ENCODE measurements at regions of chr11 and their contacts with region 1.

Region 1: DNA sequence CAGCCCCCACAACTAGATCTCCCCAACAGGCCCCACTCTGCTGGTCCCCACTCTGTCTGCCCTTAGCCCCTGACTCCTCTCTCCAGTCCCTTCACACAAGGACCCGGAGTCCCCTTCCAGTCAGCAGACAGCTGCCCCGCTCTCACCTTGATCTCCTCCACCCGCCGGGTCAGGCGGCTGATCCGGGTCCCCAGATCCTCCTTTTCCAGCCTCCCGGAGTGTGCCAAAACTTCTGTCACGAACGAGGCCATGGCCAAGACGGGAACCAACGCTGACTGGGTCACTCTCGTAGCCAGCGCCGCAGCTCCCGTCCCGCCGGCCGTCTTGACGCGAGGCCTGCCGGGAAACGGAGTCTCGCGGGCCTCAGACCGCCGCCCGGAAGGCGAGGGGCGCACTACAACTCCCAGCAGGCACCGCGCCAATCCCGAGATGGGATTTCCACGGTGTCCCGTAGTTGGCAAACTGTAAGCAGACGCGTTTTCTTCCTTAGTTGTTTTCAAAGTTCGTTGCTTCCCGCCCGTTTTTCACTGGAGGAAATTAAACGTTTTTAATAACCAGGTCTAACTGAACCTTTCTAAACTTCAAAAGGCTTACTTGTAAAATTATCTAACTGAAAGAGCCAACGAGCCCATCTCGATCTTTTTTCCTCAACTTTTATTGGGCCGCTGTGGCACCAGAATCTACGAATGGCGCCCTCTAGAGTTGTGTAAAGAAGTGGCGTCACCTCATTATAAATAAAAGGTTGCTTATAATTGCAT is at the start of gene ZW10:
- DNase-seq: peak; percentile 89
- ATAC-seq: peak; percentile 96
- H3K4me3 Mint-ChIP-seq: peak within 1 kb of the TSS; percentile 98
- H3K27ac Mint-ChIP-seq: peak within 1 kb of the TSS; percentile 82
- H3K4me1 Mint-ChIP-seq: peaks cover 21% of the 10 kb centered on the region
- H3K27me3 Mint-ChIP-seq: peaks cover 7% of the 10 kb centered on the region
- CTCF ChIP-seq: peak; percentile 54
- total RNA-seq, gene ZW10: 13.8 and 15.5 TPM in 2 replicates

Region 2: GRCh38 chr11:112226062-112226830 is 1547.3 kb before region 1 on chr11 and contains the start of gene PTS:
- CTCF ChIA-PET with region 1: no interaction called
- POLR2A ChIA-PET with region 1: interaction called, 4 read pairs
- intact Hi-C with region 1: loop called (anchors 1 kb)
- DNase-seq: peak; percentile 87
- ATAC-seq: peak; percentile 93
- H3K4me3 Mint-ChIP-seq: peak within 1 kb of the TSS; percentile 92
- H3K27ac Mint-ChIP-seq: peak within 1 kb of the TSS; percentile 96
- H3K4me1 Mint-ChIP-seq: peaks cover 13% of the 10 kb centered on the region
- H3K27me3 Mint-ChIP-seq: no peaks in the 10 kb centered on the region
- CTCF ChIP-seq: no peak
- total RNA-seq, gene PTS: 22.7 and 30.4 TPM in 2 replicates

Region 3: GRCh38 chr11:113305440-113306336 is 467.9 kb before region 1 on chr11:
- CTCF ChIA-PET with region 1: no interaction called
- POLR2A ChIA-PET with region 1: interaction called, 3 read pairs
- intact Hi-C with region 1: loop called (anchors 1 kb)
- DNase-seq: peak; percentile 48
- ATAC-seq: peak; percentile 89
- H3K4me3 Mint-ChIP-seq: no peak overlapping the region
- H3K27ac Mint-ChIP-seq: no peak overlapping the region
- H3K4me1 Mint-ChIP-seq: no peaks in the 10 kb centered on the region
- H3K27me3 Mint-ChIP-seq: peaks cover 5% of the 10 kb centered on the region
- CTCF ChIP-seq: no peak

Region 4: DNA sequence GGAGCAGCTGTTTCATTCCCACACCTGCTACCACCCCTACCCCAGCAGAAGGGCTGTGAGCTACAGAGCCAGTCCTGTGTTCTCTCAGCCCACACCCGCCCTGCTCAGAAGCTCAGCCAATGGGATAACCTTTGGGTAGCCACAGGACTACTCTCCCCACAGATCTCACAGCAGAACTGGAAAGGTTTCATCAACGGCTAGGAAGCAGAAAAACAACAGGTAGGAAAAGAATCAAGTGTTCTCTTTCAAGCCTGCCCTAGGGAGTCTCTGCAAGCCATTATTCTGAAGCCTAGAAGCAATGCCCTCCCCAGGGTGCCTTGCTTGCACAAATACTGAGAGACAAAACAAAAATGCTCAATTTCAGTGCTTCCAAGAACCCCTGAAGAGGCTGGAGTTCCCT is 144.7 kb before region 1 on chr11:
- CTCF ChIA-PET with region 1: no interaction called
- POLR2A ChIA-PET with region 1: no interaction called
- intact Hi-C with region 1: no loop called
- DNase-seq: no peak
- ATAC-seq: no peak
- H3K4me3 Mint-ChIP-seq: no peak overlapping the region
- H3K27ac Mint-ChIP-seq: no peak overlapping the region
- H3K4me1 Mint-ChIP-seq: no peaks in the 10 kb centered on the region
- H3K27me3 Mint-ChIP-seq: peaks cover 15% of the 10 kb centered on the region
- CTCF ChIP-seq: no peak

Region 5: GRCh38 chr11:113760241-113760640 is 13.4 kb before region 1 on chr11:
- CTCF ChIA-PET with region 1: no interaction called
- POLR2A ChIA-PET with region 1: no interaction called
- intact Hi-C with region 1: no loop called
- DNase-seq: no peak
- ATAC-seq: no peak
- H3K4me3 Mint-ChIP-seq: no peak overlapping the region
- H3K27ac Mint-ChIP-seq: no peak overlapping the region
- H3K4me1 Mint-ChIP-seq: no peaks in the 10 kb centered on the region
- H3K27me3 Mint-ChIP-seq: no peaks in the 10 kb centered on the region
- CTCF ChIP-seq: no peak

Region 6: GRCh38 chr11:113796663-113797259 is 23.2 kb after region 1 on chr11:
- CTCF ChIA-PET with region 1: interaction called, 5 read pairs
- POLR2A ChIA-PET with region 1: no interaction called
- intact Hi-C with region 1: loop called (anchors 2 kb)
- DNase-seq: no peak
- ATAC-seq: peak; percentile 60
- H3K4me3 Mint-ChIP-seq: no peak overlapping the region
- H3K27ac Mint-ChIP-seq: no peak overlapping the region
- H3K4me1 Mint-ChIP-seq: no peaks in the 10 kb centered on the region
- H3K27me3 Mint-ChIP-seq: no peaks in the 10 kb centered on the region
- CTCF ChIP-seq: peak; percentile 32

Region 7: GRCh38 chr11:113875234-113876073 is 101.9 kb after region 1 on chr11 and contains the start of gene USP28:
- CTCF ChIA-PET with region 1: no interaction called
- POLR2A ChIA-PET with region 1: interaction called, 6 read pairs
- intact Hi-C with region 1: loop called (anchors 1 kb)
- DNase-seq: peak; percentile 92
- ATAC-seq: peak; percentile 86
- H3K4me3 Mint-ChIP-seq: peak within 1 kb of the TSS; percentile 96
- H3K27ac Mint-ChIP-seq: peak within 1 kb of the TSS; percentile 97
- H3K4me1 Mint-ChIP-seq: peaks cover 66% of the 10 kb centered on the region
- H3K27me3 Mint-ChIP-seq: no peaks in the 10 kb centered on the region
- CTCF ChIP-seq: no peak
- total RNA-seq, gene USP28: 39.6 and 49.6 TPM in 2 replicates

Region 8: DNA sequence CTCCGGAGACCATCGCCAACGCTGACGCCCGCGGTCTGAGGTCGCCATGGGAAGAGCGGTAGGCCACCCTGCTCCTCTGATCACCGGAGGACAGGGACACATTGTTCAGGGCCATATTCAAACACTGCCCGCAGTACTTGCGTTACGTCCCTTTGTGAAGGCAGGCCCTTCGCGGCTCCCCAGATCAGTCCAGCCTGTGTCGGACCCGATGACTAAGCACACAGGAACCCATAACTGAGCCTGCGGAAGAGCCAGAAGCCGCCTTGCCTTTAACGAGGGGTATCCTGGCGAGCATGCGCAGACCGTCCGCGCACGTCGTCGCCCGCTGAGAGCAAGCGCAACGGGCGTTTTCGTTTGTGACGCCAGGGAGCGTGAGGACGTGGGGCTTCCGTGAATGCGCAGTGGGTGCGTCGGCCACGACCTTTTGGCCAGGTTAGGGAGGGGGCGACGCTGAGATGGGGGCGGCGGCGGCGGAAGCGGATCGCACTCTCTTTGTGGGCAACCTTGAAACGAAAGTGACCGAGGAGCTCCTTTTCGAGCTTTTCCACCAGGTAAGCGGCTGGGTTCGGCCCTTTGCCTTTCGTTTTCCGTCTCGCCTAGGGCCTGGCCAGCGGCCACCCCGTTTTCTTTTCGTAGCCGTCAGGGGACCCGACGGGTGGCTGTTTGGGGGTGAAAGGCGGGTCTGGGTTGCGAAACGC is 626.8 kb after region 1 on chr11 and contains the starts of genes C11orf71 and RBM7:
- CTCF ChIA-PET with region 1: no interaction called
- POLR2A ChIA-PET with region 1: no interaction called
- intact Hi-C with region 1: loop called (anchors 1 kb)
- DNase-seq: peak; percentile 93
- ATAC-seq: peak; percentile 93
- H3K4me3 Mint-ChIP-seq: peak within 1 kb of the TSS; percentile 96
- H3K27ac Mint-ChIP-seq: peak within 1 kb of the TSS; percentile 98
- H3K4me1 Mint-ChIP-seq: peaks cover 50% of the 10 kb centered on the region
- H3K27me3 Mint-ChIP-seq: no peaks in the 10 kb centered on the region
- CTCF ChIP-seq: no peak
- total RNA-seq, gene C11orf71: 9.5 and 11.1 TPM in 2 replicates
- total RNA-seq, gene RBM7: 33.6 and 34.1 TPM in 2 replicates

Measured in activated B cell treated with CpG ODN at 0.5 μM for 24 hours (primary cell).